Posterior vena cava (tissue), 2 donors: ENCODE measurements at regions of chr17 and their contacts with region 1.

Region 1: DNA sequence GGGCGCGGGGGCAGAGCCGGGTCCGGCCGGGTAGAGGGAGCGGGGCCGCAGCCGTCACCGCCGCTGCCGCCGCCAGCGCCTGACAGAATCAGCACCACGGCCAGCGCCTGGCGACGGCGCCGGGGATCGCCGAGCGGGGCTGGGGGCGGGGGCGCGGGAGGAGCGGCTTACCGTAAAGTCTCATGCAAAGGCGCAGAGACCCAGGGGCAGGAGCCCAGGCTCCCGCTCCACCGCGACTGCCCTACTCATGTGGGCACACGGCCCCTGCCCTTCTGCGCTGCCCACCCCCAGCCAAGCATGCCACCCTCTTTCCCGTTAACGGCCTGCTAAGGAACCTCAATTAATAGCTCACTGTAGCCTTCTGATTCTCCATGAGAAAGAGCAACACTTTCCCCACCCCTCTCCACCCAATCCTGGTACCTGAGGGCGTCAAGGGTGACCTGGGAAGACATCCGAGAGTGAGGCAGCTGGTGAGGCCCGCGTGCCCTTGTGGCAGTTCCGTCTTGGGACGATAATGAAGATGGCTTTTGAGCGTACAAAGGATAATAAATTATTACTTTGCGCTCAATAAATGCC is at the start of gene SEZ6:
- DNase-seq: peak; percentile 92
- total RNA-seq, gene SEZ6: not detected

Region 2: DNA sequence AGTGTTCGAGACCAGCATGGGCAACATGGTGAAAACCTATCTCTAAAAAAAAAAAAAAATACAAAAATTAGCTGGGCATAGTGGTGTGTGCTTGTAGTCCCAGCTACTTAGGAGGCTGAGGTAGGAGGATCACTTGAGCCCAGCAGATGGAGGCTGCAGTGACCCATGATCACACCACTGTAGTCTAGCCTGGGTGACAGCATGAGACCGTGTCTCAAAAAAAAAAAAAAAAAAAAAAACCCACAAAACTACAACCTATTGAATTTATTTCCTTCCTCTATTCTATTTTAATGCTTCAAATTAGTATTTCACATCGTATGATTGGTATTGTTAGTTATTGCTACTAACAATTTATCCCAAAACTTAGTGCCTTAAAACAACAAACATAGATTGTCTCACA is 297.4 kb after region 1 on chr17:
- intact Hi-C with region 1: loop called in 1 of 2 experiments (anchors 5 kb)
- DNase-seq: no peak